ENCODE measurements at regions of chr2 and their contacts with region 1.

Region 1: GRCh38 chr2:152635635-152636298 is 81.5 kb downstream of the PRPF40A start:
- DNase-seq: peak; percentile 45
- CTCF ChIP-seq: peak; percentile 78

Region 2: GRCh38 chr2:152031747-152032306 is 603.9 kb before region 1 on chr2:
- in situ Hi-C with region 1: loop called (anchors 5 kb)
- DNase-seq: no peak
- CTCF ChIP-seq: no peak

Region 3: DNA sequence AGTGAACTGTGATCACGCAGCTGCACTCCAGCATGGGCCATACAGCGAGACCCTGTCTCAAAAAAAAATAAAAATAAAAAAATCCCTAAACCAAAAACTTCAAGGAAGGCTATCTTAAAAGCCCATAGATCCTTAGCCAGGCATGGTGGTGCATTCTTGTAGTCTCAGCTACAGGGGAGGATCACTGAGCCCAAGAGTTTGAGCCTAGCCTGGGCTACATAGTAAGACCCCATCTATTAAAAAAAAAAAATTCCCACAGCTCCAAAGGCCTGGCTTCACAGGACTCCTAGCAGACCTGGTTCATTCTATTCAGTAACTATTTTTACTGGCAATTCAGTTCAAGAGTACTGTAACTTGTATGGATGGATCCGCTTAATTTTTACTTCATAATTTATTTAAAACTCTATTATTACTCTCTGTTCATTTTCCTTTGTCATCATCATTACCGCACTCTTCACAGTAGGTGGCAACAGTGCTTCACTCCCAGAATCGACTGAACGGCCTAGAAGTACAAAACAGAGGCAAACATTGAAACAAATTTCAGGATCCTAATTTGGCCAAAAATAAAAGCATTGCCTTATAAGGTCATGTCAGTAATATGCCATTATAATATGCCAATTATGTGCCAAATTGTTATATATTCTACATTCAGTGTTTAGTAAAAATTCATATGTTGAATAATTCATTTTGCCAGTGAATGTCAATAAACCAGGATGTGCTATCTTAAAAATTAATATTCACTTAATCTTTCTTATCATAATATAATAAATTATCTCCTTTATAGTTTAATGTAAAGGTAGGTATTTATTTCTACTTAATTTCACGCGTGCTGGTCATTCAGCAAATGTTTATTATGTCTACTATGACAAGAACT is 445.9 kb before region 1 on chr2:
- in situ Hi-C with region 1: loop called (anchors 10 kb)
- DNase-seq: peak; percentile 48
- CTCF ChIP-seq: peak; percentile 71

Region 4: DNA sequence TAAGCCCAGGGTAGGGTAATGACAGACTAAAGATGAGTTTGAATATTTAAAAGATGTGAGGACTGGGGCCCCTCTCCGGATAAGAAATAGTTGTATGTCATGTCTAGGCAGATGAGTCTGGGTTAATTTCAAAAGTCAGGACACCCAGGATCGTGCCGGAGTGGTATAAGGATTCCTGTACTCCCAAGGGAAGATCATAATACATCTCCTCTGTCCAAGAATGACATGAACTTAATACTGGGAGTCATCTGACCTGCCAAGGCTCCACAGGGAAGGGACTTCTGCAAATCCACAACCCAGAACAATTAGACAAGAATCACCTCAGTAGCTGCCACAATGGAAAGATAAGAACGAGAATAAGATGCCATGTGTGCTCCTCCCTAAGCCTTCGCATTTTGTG is 825.7 kb after region 1 on chr2:
- in situ Hi-C with region 1: no loop called
- DNase-seq: no peak
- CTCF ChIP-seq: no peak